Activated CD4-positive, alpha-beta memory T cell treated with anti-CD3 and anti-CD28 coated beads for 36 hours (primary cell): ENCODE measurements at regions of chr14 and their contacts with region 1.

Region 1: GRCh38 chr14:93959239-93960107 is 16.9 kb downstream of the ASB2 start:
- DNase-seq: peak; percentile 98
- H3K4me3 Mint-ChIP-seq: peak overlapping the region; percentile 78
- H3K27ac Mint-ChIP-seq: peak overlapping the region; percentile 100
- H3K4me1 Mint-ChIP-seq: peaks cover 94% of the 10 kb centered on the region
- H3K27me3 Mint-ChIP-seq: no peaks in the 10 kb centered on the region

Region 2: DNA sequence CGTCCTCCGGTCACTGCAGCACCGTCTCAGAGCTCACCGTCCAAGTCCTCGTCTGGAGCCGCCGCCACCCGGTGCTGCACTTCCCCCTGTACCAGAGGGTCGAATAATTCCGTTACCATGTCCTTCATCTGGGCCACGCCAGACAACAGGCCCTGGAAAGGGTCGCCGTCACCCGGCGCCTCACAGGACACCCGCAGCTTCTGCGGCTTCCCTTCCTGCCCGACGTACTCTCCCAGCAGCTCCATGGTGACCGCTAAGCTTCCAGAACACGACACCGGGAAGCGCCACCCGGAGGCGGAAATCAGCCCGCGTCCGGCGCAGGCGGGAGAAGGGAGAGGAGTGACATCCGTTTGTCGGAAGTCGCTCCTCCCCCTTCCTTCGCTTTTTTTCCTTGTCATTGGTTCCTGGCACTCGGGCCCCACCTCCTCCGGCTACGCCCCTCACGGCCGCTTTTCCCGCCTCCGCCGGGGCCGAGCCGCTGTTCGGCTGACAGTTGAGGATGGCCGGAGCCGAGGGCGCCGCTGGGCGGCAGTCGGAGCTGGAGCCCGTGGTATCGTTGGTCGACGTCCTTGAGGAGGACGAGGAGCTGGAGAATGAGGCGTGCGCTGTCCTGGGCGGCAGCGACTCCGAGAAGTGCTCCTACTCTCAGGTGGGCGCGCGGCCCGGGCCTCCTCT is 752.5 kb before region 1 on chr14 and contains the starts of genes GON7 and UBR7:
- CTCF ChIA-PET with region 1: no interaction called
- POLR2A ChIA-PET with region 1: no interaction called
- intact Hi-C with region 1: loop called (anchors 10 kb)
- DNase-seq: peak; percentile 94
- H3K4me3 Mint-ChIP-seq: peak within 1 kb of the TSS; percentile 99
- H3K27ac Mint-ChIP-seq: peak within 1 kb of the TSS; percentile 94
- H3K4me1 Mint-ChIP-seq: peaks cover 32% of the 10 kb centered on the region
- H3K27me3 Mint-ChIP-seq: no peaks in the 10 kb centered on the region
- total RNA-seq, gene GON7: 12.4 to 12.5 TPM
- total RNA-seq, gene UBR7: 48.0 to 51.6 TPM

Region 3: GRCh38 chr14:93975791-93976476 is 16.5 kb after region 1 on chr14:
- CTCF ChIA-PET with region 1: interaction called, 94 read pairs
- POLR2A ChIA-PET with region 1: interaction called, 447 read pairs
- intact Hi-C with region 1: loop called (anchors 1 kb)
- DNase-seq: peak; percentile 70
- H3K4me3 Mint-ChIP-seq: peak overlapping the region; percentile 75
- H3K27ac Mint-ChIP-seq: peak overlapping the region; percentile 98
- H3K4me1 Mint-ChIP-seq: peaks cover 97% of the 10 kb centered on the region
- H3K27me3 Mint-ChIP-seq: no peaks in the 10 kb centered on the region

Region 4: GRCh38 chr14:94021001-94021400 is 61.5 kb after region 1 on chr14:
- CTCF ChIA-PET with region 1: interaction called, 4 read pairs
- POLR2A ChIA-PET with region 1: interaction called, 11 read pairs
- intact Hi-C with region 1: loop called (anchors 1 kb)
- DNase-seq: peak; percentile 36
- H3K4me3 Mint-ChIP-seq: no peak overlapping the region
- H3K27ac Mint-ChIP-seq: peak overlapping the region; percentile 70
- H3K4me1 Mint-ChIP-seq: peaks cover 31% of the 10 kb centered on the region
- H3K27me3 Mint-ChIP-seq: no peaks in the 10 kb centered on the region

Region 5: GRCh38 chr14:94129111-94129757 is 169.8 kb after region 1 on chr14 and contains the start of gene IFI27L2:
- CTCF ChIA-PET with region 1: no interaction called
- POLR2A ChIA-PET with region 1: no interaction called
- intact Hi-C with region 1: loop called (anchors 5 kb)
- DNase-seq: peak; percentile 85
- H3K4me3 Mint-ChIP-seq: peak within 1 kb of the TSS; percentile 85
- H3K27ac Mint-ChIP-seq: peak within 1 kb of the TSS; percentile 76
- H3K4me1 Mint-ChIP-seq: peaks cover 12% of the 10 kb centered on the region
- H3K27me3 Mint-ChIP-seq: no peaks in the 10 kb centered on the region
- total RNA-seq, gene IFI27L2: 69.3 to 74.4 TPM

Region 6: GRCh38 chr14:95265106-95266094 is 1305.9 kb after region 1 on chr14:
- CTCF ChIA-PET with region 1: no interaction called
- POLR2A ChIA-PET with region 1: no interaction called
- intact Hi-C with region 1: loop called (anchors 5 kb)
- DNase-seq: peak; percentile 72
- H3K4me3 Mint-ChIP-seq: no peak overlapping the region
- H3K27ac Mint-ChIP-seq: no peak overlapping the region
- H3K4me1 Mint-ChIP-seq: peaks cover 46% of the 10 kb centered on the region
- H3K27me3 Mint-ChIP-seq: peaks cover 1% of the 10 kb centered on the region